ENCODE measurements at regions of chr1 and their contacts with region 1.

Region 1: GRCh38 chr1:153922972-153923925 is at the start of gene GATAD2B:
- DNase-seq: peak; percentile 96 to 100
- H3K4me3 ChIP-seq: peak within 1 kb of the TSS; percentile 89 to 100 (median 96)
- H3K27ac ChIP-seq: peak within 1 kb of the TSS; percentile 83; the same call in 1 of the 2 replicates
- H3K4me1 ChIP-seq: peaks cover 6 to 14% (median 11%) of the 10 kb centered on the region in 4 experiments
- H3K27me3 ChIP-seq: no peaks in the 10 kb centered on the region
- CTCF ChIP-seq: no peak
- EP300 ChIP-seq: no peak
- POLR2A ChIP-seq: peak in 1 of 2 experiments; percentile 16; a peak in 2 of 3 replicates
- RAD21 ChIP-seq: peak in 1 of 2 experiments; percentile 9; a peak in 1 of 4 replicates
- total RNA-seq, gene GATAD2B: 39.1 and 41.5 TPM in 2 replicates

Region 2: GRCh38 chr1:153805042-153805745 is 118.1 kb before region 1 on chr1:
- CTCF ChIA-PET with region 1: interaction called, 4 read pairs
- POLR2A ChIA-PET with region 1: interaction called, 12 read pairs
- DNase-seq: no peak
- H3K4me3 ChIP-seq: no peak overlapping the region
- H3K27ac ChIP-seq: no peak overlapping the region
- H3K4me1 ChIP-seq: no peaks in the 10 kb centered on the region
- H3K27me3 ChIP-seq: no peaks in the 10 kb centered on the region
- CTCF ChIP-seq: no peak
- EP300 ChIP-seq: no peak
- POLR2A ChIP-seq: no peak
- RAD21 ChIP-seq: no peak

Region 3: GRCh38 chr1:153946622-153947241 is 23.5 kb after region 1 on chr1 and contains the start of gene DENND4B:
- CTCF ChIA-PET with region 1: interaction called, 10 read pairs
- POLR2A ChIA-PET with region 1: interaction called, 73 read pairs
- DNase-seq: peak in 1 of 2 experiments; percentile 93
- H3K4me3 ChIP-seq: peak within 1 kb of the TSS; percentile 79 to 87 (median 80)
- H3K27ac ChIP-seq: peak within 1 kb of the TSS; percentile 55; the same call in 1 of the 2 replicates
- H3K4me1 ChIP-seq: peaks cover 0 to 5% (median 2%) of the 10 kb centered on the region in 4 experiments; a peak in 2 of 7 replicates
- H3K27me3 ChIP-seq: no peaks in the 10 kb centered on the region
- CTCF ChIP-seq: peak; percentile 90 to 94 (median 91)
- EP300 ChIP-seq: peak in 1 of 2 experiments; percentile 50; a peak in 1 of 3 replicates
- POLR2A ChIP-seq: no peak
- RAD21 ChIP-seq: peak; percentile 61 to 71
- total RNA-seq, gene DENND4B: 61.1 and 62.8 TPM in 2 replicates

Region 4: GRCh38 chr1:153967082-153968000 is 44.1 kb after region 1 on chr1 and contains the start of gene CREB3L4:
- CTCF ChIA-PET with region 1: interaction called, 3 read pairs
- POLR2A ChIA-PET with region 1: interaction called, 47 read pairs
- DNase-seq: peak in 1 of 2 experiments; percentile 90
- H3K4me3 ChIP-seq: peak within 1 kb of the TSS; percentile 51 to 77 (median 66)
- H3K27ac ChIP-seq: peak within 1 kb of the TSS; percentile 91
- H3K4me1 ChIP-seq: peaks cover 0 to 12% (median 6%) of the 10 kb centered on the region in 4 experiments; a peak in 5 of 7 replicates
- H3K27me3 ChIP-seq: no peaks in the 10 kb centered on the region
- CTCF ChIP-seq: peak in 2 of 3 experiments; percentile 37 to 51; a peak in 2 of 4 replicates
- EP300 ChIP-seq: no peak
- POLR2A ChIP-seq: peak; percentile 78 to 82
- RAD21 ChIP-seq: peak; percentile 6 to 11; a peak in 1 of 4 replicates
- total RNA-seq, gene CREB3L4: 34.4 and 37.2 TPM in 2 replicates

Measured in H1 (cell line).